ENCODE measurements at regions of chr18 and their contacts with region 1.

Region 1: DNA sequence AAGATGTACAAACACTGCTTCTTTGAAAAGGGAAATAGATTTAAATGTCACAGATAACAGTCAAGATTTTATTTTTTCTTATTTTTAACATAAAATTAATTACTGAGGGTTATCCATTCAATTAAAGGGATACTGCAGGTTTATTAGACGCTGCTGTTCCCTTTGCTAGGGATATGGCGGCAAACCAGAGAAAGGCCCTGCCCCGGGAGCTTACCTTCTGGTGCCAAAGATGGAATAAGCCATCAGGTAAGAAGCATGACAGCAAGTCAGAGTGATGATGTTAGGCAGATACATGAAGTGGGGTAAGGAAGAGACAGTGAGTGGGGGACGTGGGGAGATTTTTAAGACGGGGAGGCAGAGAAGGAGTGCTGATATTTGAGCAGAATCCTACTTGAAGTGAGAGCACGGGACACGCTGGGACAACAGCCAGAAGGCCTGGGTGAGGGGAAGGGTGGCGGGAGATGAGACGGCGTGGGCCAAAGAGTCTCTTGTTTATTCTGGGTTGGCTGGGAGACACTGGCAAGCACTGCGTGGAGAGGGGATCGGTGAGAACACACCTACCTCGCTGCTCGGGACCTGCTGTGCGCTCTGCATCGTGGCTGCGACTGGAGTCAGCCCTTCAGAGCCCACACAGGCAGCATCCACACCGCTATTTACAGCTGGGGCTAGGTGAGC is 250.5 kb upstream of the TMEM200C start:
- DNase-seq: no peak
- ATAC-seq: no peak
- H3K4me3 ChIP-seq: no peak overlapping the region
- H3K4me3 Mint-ChIP-seq: no peak overlapping the region
- H3K27ac ChIP-seq: no peak overlapping the region
- H3K27ac Mint-ChIP-seq: no peak overlapping the region
- H3K4me1 ChIP-seq: no peaks in the 10 kb centered on the region
- H3K4me1 Mint-ChIP-seq: no peaks in the 10 kb centered on the region
- H3K27me3 ChIP-seq: no peaks in the 10 kb centered on the region
- H3K27me3 Mint-ChIP-seq: no peaks in the 10 kb centered on the region

Region 2: GRCh38 chr18:5930789-5931188 is 215.0 kb before region 1 on chr18:
- CTCF ChIA-PET with region 1: interaction called in 1 of 2 experiments, 11 read pairs
- POLR2A ChIA-PET with region 1: no interaction called
- DNase-seq: no peak
- ATAC-seq: no peak
- H3K4me3 ChIP-seq: no peak overlapping the region
- H3K4me3 Mint-ChIP-seq: no peak overlapping the region
- H3K27ac ChIP-seq: no peak overlapping the region
- H3K27ac Mint-ChIP-seq: no peak overlapping the region
- H3K4me1 ChIP-seq: no peaks in the 10 kb centered on the region
- H3K4me1 Mint-ChIP-seq: no peaks in the 10 kb centered on the region
- H3K27me3 ChIP-seq: no peaks in the 10 kb centered on the region
- H3K27me3 Mint-ChIP-seq: peaks cover 7% of the 10 kb centered on the region in 2 donors

Region 3: GRCh38 chr18:6132751-6133368 is 12.9 kb before region 1 on chr18:
- CTCF ChIA-PET with region 1: no interaction called
- POLR2A ChIA-PET with region 1: no interaction called
- DNase-seq: no peak
- ATAC-seq: no peak
- H3K4me3 ChIP-seq: no peak overlapping the region
- H3K4me3 Mint-ChIP-seq: no peak overlapping the region
- H3K27ac ChIP-seq: no peak overlapping the region
- H3K27ac Mint-ChIP-seq: no peak overlapping the region
- H3K4me1 ChIP-seq: no peaks in the 10 kb centered on the region
- H3K4me1 Mint-ChIP-seq: peaks cover 0 to 5% (median 0%) of the 10 kb centered on the region in 3 donors
- H3K27me3 ChIP-seq: no peaks in the 10 kb centered on the region
- H3K27me3 Mint-ChIP-seq: no peaks in the 10 kb centered on the region

Region 4: GRCh38 chr18:6161549-6161948 is 15.8 kb after region 1 on chr18:
- CTCF ChIA-PET with region 1: no interaction called
- POLR2A ChIA-PET with region 1: no interaction called
- DNase-seq: no peak
- ATAC-seq: no peak
- H3K4me3 ChIP-seq: no peak overlapping the region
- H3K4me3 Mint-ChIP-seq: no peak overlapping the region
- H3K27ac ChIP-seq: no peak overlapping the region
- H3K27ac Mint-ChIP-seq: no peak overlapping the region
- H3K4me1 ChIP-seq: no peaks in the 10 kb centered on the region
- H3K4me1 Mint-ChIP-seq: no peaks in the 10 kb centered on the region
- H3K27me3 ChIP-seq: no peaks in the 10 kb centered on the region
- H3K27me3 Mint-ChIP-seq: no peaks in the 10 kb centered on the region